Panc1 (cell line): ENCODE measurements at regions of chr16 and their contacts with region 1.

Region 1: GRCh38 chr16:2278272-2278608 is 10.3 kb upstream of the RNPS1 start:
- DNase-seq: no peak
- ATAC-seq: peak; percentile 57; the same call in 1 of the 2 replicates
- H3K4me3 ChIP-seq: no peak overlapping the region
- H3K27ac ChIP-seq: no peak overlapping the region
- H3K4me1 ChIP-seq: no peaks in the 10 kb centered on the region
- H3K27me3 ChIP-seq: no peaks in the 10 kb centered on the region
- CTCF ChIP-seq: no peak; the same call in 1 of the 2 replicates

Region 2: GRCh38 chr16:2326191-2326590 is 48.0 kb after region 1 on chr16:
- CTCF ChIA-PET with region 1: no interaction called
- POLR2A ChIA-PET with region 1: interaction called, 25 read pairs
- in situ Hi-C with region 1: no loop called
- intact Hi-C with region 1: no loop called
- DNase-seq: no peak
- ATAC-seq: no peak
- H3K4me3 ChIP-seq: no peak overlapping the region
- H3K27ac ChIP-seq: no peak overlapping the region
- H3K4me1 ChIP-seq: no peaks in the 10 kb centered on the region
- H3K27me3 ChIP-seq: no peaks in the 10 kb centered on the region
- CTCF ChIP-seq: no peak